ENCODE measurements at regions of chr10 and their contacts with region 1.

Region 1: DNA sequence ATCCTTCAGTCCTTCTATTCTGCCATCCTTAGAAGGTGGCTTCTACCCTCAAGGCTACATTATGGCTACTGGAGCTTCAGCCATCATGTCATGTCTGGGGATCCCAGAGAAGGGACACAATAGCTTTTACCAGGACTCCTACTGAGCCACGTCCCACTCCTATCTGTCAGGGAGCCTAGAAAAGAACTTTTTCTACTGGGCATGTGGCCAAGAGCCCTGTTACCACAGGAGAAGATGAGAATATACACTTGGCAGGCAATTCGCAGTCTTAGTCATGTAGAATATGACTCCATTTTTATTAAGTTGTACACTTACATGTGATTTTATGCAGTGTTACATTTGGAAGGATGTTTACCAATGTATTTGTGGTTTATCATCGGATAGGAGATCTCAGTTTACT is 64.6 kb upstream of the KCNMA1 start:
- DNase-seq: peak; percentile 94
- ATAC-seq: peak; percentile 90
- H3K4me3 ChIP-seq: no peak overlapping the region
- H3K27ac ChIP-seq: no peak overlapping the region
- H3K4me1 ChIP-seq: peaks cover 2% of the 10 kb centered on the region; the same call in 1 of the 2 replicates
- H3K27me3 ChIP-seq: peaks cover 7% of the 10 kb centered on the region
- CTCF ChIP-seq: no peak
- POLR2A ChIP-seq: no peak
- RAD21 ChIP-seq: no peak

Region 2: DNA sequence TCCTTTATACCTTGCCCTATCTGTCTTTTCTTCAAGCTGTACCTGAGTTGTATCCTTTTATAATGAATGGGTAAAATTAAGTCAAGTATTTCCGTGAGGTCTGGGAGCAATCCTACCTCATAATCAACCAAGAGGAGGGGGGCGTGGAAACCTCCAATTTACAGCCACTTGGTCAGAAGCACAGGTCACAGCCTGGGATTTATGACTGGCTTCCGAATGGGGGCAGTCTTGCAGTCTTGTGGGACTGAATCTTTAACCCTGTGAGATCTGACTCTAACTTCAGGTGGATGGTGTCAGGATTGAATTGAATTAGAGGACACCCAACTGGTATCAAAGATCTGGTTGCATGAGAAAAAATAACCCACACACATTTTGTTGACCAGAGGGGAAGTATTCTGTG is 41.1 kb before region 1 on chr10:
- CTCF ChIA-PET with region 1: no interaction called
- POLR2A ChIA-PET with region 1: no interaction called
- dilution Hi-C with region 1: no loop called
- in situ Hi-C with region 1: no loop called
- intact Hi-C with region 1: loop called (anchors 5 kb)
- DNase-seq: no peak
- ATAC-seq: no peak
- H3K4me3 ChIP-seq: no peak overlapping the region
- H3K27ac ChIP-seq: no peak overlapping the region
- H3K4me1 ChIP-seq: peaks cover 4% of the 10 kb centered on the region; the same call in 1 of the 2 replicates
- H3K27me3 ChIP-seq: peaks cover 8% of the 10 kb centered on the region
- CTCF ChIP-seq: no peak
- POLR2A ChIP-seq: no peak
- RAD21 ChIP-seq: no peak